Gastrocnemius medialis (tissue), 4 donors: ENCODE measurements at regions of chr1 and their contacts with region 1.

Region 1: DNA sequence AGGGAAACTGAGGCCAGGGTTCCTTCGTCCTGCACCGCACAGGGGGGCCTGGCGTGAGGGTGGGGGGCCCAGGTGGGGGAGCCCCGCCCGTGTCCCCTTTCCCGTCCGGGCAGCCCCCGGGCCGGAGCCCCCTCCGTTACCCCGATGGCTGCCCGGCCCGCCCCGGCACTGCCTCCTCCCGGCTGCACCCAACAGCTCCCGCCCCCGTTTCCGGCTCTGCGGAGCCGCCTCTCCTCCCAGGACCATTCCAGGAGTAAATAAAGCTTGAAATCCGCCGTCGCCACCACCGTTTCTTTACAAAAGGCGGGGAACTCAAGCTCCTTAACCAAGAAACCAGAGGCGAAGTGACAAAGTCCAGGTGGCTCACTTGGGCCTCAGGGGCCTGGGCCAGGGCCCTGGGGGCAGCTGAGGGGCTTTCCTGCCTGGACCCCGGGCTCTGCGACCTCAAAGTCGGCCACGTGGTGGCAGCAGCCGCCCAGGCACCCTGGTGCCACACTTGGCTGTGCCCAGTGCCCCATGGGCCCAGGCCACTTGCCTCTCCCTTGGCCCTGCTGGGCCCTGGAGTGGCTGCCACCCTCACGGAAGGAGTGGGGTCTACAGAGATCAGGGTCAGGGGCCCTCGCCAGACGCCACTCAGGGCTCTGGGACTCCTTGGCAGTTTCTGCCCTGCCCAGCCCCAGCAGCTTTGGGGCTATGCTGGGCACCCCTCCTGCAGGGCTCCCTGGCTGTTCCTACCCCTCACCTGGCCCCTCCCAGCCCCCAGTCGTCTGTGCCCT is 514 bp upstream of the FAAP20 start:
- DNase-seq: peak; percentile 77 to 83
- ATAC-seq: peak; percentile 70 to 76
- H3K4me3 ChIP-seq: peak overlapping the region; percentile 58 to 98 (median 78)
- H3K27ac ChIP-seq: peak overlapping the region; percentile 97 to 100 (median 98)
- H3K4me1 ChIP-seq: peaks cover 39 to 62% of the 10 kb centered on the region in 2 donors
- H3K27me3 ChIP-seq: no peaks in the 10 kb centered on the region
- CTCF ChIP-seq: peak; percentile 93 to 99 (median 98)
- POLR2A ChIP-seq: peak in 1 of 2 donors; percentile 26

Region 2: DNA sequence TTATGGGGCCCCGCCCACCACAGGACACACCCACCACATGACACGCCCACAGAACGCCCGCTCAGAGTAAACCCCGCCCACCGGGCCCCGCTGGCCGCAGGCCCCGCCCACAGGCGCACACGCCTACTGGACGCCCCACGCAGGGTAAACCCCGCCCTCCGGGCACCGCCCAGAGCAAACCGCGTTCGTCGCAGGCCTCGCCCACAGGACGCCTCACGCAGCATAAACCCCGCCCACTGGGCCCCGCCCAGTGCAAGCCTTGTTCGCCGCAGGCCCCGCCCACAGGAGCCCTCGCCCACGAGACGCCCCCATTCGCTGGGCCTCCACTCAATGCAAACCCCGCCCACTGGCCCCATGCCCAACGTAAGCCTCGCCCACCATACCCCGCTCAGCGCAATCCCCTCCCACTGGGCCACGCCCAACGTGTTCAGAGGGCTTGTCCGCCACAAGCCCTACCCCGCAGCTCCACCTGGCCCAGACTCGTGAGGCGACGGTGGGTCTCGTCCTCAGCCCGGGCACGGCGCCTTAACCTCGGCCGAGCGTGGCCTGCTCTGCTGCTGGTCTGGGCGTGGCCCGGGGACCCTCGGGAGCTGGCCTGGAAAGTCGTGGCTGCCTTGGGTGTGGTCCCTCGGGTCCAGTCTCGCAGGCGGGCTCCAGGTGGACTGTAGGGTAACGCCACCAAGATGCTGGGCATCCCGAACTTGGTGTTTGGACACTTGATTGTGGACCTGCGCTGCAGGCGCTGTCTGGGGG is 275.6 kb before region 1 on chr1:
- in situ Hi-C with region 1: no loop called
- intact Hi-C with region 1: loop called (anchors 10 kb)
- DNase-seq: peak; percentile 98 to 99
- ATAC-seq: peak; percentile 67 to 77
- H3K4me3 ChIP-seq: peak overlapping the region; percentile 53 to 92 (median 68)
- H3K27ac ChIP-seq: peak overlapping the region; percentile 80 to 98 (median 93)
- H3K4me1 ChIP-seq: peaks cover 27 to 45% of the 10 kb centered on the region in 2 donors
- H3K27me3 ChIP-seq: no peaks in the 10 kb centered on the region
- CTCF ChIP-seq: no peak
- POLR2A ChIP-seq: no peak

Region 3: DNA sequence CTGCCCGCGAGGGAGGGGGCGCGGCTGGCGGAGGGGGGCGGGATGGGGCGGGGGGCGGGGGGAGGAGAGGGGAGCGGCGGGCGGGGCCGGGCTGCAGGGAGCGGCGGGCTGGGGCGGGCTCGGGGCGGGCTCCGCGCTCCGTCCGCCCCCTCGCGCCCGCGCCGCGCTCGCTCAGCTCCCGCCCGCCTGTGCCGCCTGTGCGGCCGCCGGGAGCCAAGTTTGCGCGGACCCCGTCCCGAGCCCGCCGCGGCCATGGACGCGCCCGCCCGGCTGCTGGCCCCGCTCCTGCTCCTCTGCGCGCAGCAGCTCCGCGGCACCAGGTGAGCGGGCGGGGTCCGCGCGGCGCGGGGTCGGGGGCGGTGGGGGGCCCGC is 175.9 kb before region 1 on chr1 and contains the start of gene GABRD:
- in situ Hi-C with region 1: no loop called
- intact Hi-C with region 1: no loop called
- DNase-seq: no peak
- ATAC-seq: no peak
- H3K4me3 ChIP-seq: no peak within 1 kb of the TSS
- H3K27ac ChIP-seq: no peak within 1 kb of the TSS
- H3K4me1 ChIP-seq: no peaks in the 10 kb centered on the region
- H3K27me3 ChIP-seq: peaks cover 53 to 67% (median 62%) of the 10 kb centered on the region in 3 donors
- CTCF ChIP-seq: no peak
- POLR2A ChIP-seq: no peak
- total RNA-seq, gene GABRD: 1.9 TPM in 1 of 4 donors, not detected in the others

Region 4: GRCh38 chr1:2314803-2315673 is 120.0 kb after region 1 on chr1:
- in situ Hi-C with region 1: loop called in 2 of 4 experiments (anchors 25 kb)
- intact Hi-C with region 1: loop called (anchors 1 kb)
- DNase-seq: no peak
- ATAC-seq: peak; percentile 32 to 41
- H3K4me3 ChIP-seq: peak overlapping the region; percentile 49 to 57 (median 52)
- H3K27ac ChIP-seq: peak overlapping the region; percentile 61 to 72 (median 69)
- H3K4me1 ChIP-seq: peaks cover 17 to 18% of the 10 kb centered on the region in 2 donors
- H3K27me3 ChIP-seq: peaks cover 0 to 17% (median 3%) of the 10 kb centered on the region in 3 donors
- CTCF ChIP-seq: peak; percentile 51 to 98 (median 88)
- POLR2A ChIP-seq: no peak

Region 5: DNA sequence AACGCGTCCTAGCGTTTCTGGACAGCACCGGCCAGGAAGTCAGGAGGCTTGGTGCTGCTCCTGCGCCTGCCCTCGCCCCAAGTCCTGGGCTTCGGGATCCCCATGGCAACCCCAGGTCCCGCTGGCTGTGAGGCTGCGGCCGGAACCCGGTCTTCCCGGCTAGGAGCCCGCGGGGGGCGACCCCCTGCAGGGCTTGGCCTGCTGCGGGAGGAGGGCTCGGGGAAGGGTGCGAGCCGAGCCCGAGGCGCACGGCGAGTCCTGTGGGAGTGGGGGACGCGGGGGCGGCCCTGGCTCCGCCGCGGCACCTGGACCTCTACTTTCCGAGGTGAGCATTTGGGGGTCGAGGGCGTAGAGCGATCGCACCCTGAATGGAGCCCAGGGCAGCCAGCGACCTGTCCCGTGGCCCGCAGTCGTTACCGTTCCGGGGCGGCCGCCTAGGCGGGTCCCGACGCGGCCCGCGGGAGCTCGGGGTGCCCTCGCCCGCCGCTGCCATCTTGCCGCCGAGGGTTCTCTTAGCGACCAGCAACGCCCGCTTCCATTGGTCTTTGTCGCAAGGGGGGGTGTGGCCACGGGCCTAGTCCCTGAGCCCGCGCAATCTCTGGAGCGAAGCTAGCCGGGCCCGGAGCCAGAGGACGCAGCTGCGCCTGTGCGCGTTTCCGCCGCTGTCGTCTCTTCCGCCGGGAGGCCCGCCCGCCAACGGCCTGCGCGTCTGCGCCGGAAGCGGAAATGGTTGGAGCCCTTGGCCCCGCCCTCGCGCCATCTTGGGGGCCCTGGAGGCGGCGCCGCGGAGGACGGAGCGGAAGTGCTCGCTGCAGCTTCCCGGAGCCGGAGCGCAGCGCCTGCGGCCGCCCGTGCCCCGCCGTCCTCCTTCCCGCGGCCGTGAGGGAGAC is 196.2 kb after region 1 on chr1 and contains the starts of genes MORN1 and RER1:
- in situ Hi-C with region 1: loop called (anchors 5 to 10 kb)
- intact Hi-C with region 1: no loop called
- DNase-seq: peak; percentile 98
- ATAC-seq: peak; percentile 97 to 99
- H3K4me3 ChIP-seq: peak within 1 kb of the TSS; percentile 77 to 86 (median 84)
- H3K27ac ChIP-seq: peak within 1 kb of the TSS; percentile 67 to 90 (median 85)
- H3K4me1 ChIP-seq: peaks cover 27 to 33% of the 10 kb centered on the region in 2 donors
- H3K27me3 ChIP-seq: no peaks in the 10 kb centered on the region
- CTCF ChIP-seq: no peak
- POLR2A ChIP-seq: peak; percentile 82 to 96
- total RNA-seq, gene MORN1: 1.9 to 4.7 (median 3.5) TPM
- total RNA-seq, gene RER1: 51.1 to 60.5 (median 55.4) TPM

Region 6: DNA sequence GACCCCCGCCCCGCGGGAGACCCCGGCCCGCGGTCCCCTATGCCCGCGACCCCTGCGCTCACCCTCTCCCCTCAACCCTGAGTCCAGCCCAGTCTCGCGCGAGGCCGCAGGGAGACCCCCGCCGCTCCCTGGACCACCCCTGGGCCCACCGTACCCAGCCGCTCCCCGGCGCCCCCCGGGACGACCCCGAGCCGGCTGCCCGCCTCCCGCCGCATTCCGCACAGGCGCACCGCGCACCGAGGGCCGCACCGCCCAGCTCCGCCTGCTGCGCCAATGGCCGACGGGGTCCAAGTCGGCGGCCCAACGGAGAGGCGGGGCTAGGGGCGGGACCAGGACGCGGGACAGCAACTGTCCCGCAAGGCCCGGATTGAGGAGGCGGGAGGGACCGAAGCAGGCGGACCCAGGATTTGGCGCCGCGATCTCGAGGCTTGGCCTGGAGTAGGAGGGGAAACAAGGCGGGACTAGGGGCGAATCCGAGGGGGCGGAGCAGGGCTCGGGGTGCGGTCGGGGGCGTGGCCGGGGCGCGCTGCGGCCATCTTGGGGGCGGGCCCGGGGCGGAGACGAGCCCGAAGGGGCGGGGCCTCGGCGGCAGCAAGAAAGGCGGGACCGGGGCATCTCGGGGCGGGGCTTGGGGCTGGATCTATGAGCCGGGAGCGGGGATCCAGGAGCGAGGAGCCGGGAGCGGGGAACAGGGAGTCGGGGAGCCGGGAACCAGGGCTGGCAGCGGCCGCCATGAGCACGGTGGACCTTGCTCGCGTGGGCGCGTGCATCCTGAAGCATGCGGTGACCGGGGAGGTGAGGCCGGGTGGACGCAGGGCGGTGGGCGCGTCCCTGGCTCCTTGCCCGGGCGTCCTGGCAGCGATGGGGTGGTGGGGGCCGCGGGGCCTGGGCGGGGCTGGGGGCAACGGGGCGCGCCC is 391.3 kb after region 1 on chr1 and contains the start of gene PRXL2B:
- in situ Hi-C with region 1: loop called in 2 of 4 experiments (anchors 25 kb)
- intact Hi-C with region 1: loop called (anchors 5 kb)
- DNase-seq: peak; percentile 98
- ATAC-seq: peak; percentile 92 to 93
- H3K4me3 ChIP-seq: peak within 1 kb of the TSS; percentile 65 to 92 (median 71)
- H3K27ac ChIP-seq: peak within 1 kb of the TSS; percentile 87 to 97 (median 91)
- H3K4me1 ChIP-seq: peaks cover 11 to 17% of the 10 kb centered on the region in 2 donors
- H3K27me3 ChIP-seq: peaks cover 0 to 8% (median 6%) of the 10 kb centered on the region in 3 donors
- CTCF ChIP-seq: no peak
- POLR2A ChIP-seq: peak; percentile 79 to 83
- total RNA-seq, gene PRXL2B: 0.52 to 2.7 (median 1.1) TPM